ENCODE measurements at regions of chr22 and their contacts with region 1.

Region 1: GRCh38 chr22:35430897-35431322 is 31.0 kb downstream of the MCM5 start:
- DNase-seq: peak; percentile 93
- ATAC-seq: peak; percentile 81
- H3K4me3 Mint-ChIP-seq: no peak overlapping the region
- H3K27ac Mint-ChIP-seq: no peak overlapping the region
- H3K4me1 Mint-ChIP-seq: peaks cover 11% of the 10 kb centered on the region
- H3K27me3 Mint-ChIP-seq: no peaks in the 10 kb centered on the region
- CTCF ChIP-seq: peak; percentile 97

Region 2: DNA sequence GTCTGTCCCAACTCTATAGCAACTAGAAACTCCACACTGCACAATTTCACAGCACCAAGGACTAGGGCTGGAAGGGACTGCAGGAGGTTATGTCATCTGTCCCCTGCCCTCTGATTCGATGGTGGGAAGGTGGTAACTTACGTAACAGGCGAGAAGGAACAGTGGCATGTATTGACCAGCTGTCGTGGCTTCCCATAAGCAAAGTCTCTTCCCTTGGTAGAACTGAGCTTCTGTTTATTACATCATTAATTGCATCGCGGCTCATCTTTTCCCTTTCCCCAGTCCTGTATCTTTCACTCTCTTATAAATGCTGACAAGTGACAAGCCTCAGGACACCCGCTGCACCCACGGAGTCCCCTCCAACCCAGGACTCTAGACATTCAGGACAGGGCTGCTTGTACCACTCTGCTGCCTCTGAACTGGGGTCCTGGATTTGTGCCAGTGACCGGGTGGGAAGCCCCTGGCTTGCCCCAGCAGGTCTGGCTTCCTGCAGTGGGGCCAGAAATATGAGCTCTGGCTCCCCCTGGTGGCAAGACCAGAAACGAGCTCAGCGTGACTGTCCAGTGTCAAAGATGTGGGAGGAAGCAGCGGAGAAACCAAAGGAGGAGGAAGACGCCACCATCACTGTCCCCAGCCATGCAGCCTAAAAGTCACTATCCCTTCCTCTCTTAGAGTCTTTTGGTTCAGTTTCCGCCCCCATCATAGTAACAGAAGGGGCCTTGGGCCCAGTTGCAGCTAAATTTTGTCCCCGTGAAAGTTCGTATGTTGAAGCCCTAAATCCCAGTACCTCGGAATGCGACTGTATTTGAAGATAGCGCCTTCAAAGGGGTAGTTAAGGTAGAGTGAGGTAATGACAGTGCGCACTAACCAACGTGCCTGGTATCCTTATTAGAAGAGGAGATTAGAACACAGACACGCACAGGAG is 280.5 kb before region 1 on chr22:
- CTCF ChIA-PET with region 1: no interaction called
- POLR2A ChIA-PET with region 1: no interaction called
- DNase-seq: peak; percentile 89
- ATAC-seq: peak; percentile 54
- H3K4me3 Mint-ChIP-seq: no peak overlapping the region
- H3K27ac Mint-ChIP-seq: no peak overlapping the region
- H3K4me1 Mint-ChIP-seq: peaks cover 35% of the 10 kb centered on the region
- H3K27me3 Mint-ChIP-seq: peaks cover 23% of the 10 kb centered on the region
- CTCF ChIP-seq: peak; percentile 82

Region 3: DNA sequence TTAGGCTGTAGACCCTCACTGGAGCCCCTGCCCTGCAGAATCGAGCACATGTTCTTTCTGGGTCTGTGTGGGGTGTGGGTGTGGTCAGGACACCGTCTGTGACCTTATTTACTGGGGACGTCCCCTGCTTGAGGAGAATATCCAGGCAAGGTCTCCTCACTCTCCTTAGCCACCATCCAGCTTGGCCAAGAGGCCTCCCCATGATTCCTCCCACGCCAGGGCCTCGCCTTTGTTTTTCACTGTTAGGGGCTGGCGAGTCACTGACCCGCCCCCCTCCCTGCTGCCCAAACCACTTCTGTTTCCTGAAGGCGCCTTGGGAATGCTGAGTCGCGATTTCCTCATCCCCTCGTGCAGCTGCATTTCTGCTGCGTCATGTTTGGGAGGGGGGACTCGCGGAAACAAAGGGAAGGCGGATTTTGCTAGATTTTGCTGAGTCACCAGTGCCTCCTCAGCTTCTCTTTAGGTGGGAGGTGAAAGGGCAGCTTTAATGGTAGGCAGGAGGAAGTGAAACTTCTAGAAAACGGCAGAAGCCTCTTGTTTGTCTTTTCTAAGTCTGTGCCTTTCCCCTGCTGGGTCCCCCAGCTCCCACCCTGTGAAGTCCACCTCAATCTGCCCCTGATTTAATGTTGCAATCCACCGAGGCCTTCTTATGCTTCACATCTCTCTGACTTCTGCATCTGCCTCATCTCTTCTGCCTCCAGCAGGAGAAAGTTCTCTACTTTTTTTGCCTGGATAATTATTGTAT is 54.0 kb before region 1 on chr22:
- CTCF ChIA-PET with region 1: interaction called, 4 read pairs
- POLR2A ChIA-PET with region 1: interaction called, 10 read pairs
- DNase-seq: peak; percentile 94
- ATAC-seq: peak; percentile 46
- H3K4me3 Mint-ChIP-seq: peak overlapping the region; percentile 18; the same call in 1 of the 2 replicates
- H3K27ac Mint-ChIP-seq: peak overlapping the region; percentile 90
- H3K4me1 Mint-ChIP-seq: peaks cover 70% of the 10 kb centered on the region
- H3K27me3 Mint-ChIP-seq: peaks cover 2% of the 10 kb centered on the region; the same call in 1 of the 2 replicates
- CTCF ChIP-seq: no peak

Region 4: DNA sequence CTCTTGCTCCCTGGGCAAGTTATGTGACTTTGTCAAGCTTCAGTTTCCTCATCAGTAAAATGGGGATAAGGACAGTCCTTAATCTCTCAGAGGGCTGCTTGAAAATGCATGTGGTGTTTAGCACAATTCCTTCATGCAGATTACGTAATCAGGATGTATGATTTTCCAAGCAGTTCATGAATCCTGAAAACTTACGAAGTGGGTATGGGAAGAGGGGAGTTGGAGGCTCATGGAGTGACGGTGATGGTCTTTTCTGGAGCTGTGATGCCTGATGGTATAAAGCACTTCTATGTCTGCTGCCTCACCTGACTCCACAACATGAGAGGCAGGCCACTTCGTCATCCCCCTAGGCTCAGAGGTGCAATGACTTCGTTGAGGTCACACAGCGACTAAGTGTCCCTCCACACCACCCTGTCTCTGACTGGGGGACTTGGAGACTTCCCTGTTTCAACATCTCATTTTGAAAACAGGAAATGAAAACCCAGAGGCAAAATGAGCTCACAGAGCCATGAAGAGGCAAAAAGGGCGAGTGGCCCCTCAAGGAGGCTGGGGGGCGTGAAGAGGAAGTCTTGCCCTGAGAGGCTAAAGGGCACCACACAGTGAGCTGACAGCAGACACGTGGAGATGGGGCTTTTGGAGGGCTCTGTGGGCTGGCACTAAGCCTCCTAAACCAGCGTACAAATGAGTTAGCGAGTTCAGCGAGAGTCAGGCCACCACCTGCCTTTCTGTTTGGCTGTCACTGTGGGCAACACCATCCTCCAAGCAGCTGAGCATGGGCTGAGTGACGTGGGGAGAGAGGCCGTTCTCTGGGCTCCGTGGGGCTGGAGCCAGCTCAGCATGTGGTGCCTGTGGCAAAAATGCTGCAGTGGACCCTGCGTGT is 20.9 kb before region 1 on chr22:
- CTCF ChIA-PET with region 1: interaction called, 3 read pairs
- POLR2A ChIA-PET with region 1: interaction called, 11 read pairs
- DNase-seq: no peak
- ATAC-seq: no peak
- H3K4me3 Mint-ChIP-seq: no peak overlapping the region
- H3K27ac Mint-ChIP-seq: 0 out of 2 replicates have a peak overlapping the region, but pooled peaks have one; percentile 15
- H3K4me1 Mint-ChIP-seq: no peaks in the 10 kb centered on the region
- H3K27me3 Mint-ChIP-seq: no peaks in the 10 kb centered on the region
- CTCF ChIP-seq: no peak

Region 5: DNA sequence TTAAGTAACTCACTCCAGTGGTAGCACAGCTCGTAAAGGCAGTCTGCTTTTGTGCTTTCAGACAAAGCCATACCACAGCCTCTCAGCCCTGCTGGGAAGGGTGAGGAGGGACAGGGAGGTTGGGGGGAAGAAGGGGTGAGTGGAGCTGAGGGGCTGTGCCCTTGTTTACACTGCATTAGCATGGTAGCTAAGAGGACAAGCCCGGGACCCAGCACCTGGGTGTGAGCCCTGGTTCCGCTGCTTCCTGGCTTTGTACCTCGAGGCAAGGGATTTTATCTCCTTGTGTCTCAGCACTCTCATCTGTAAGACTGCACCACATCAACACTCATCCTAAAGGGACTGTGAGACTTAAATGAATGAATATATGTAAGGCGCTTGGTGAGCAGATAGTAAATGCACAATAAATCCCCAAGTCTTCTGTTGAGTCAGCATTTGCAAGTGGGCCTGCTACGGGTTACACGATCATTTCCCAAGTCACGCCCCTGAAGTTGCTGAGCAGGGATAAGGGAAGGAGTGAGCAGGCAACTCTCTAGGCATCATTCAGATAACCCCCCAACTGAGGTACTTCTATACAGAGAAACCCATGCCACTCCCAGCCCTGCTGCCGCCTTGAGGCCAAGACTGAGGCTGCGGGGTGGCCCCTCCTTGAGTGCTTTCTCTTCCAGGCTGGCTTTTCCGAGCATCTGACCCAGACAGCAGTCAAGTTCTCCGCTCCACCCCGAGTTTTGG is 117.2 kb after region 1 on chr22:
- CTCF ChIA-PET with region 1: interaction called, 14 read pairs
- POLR2A ChIA-PET with region 1: no interaction called
- DNase-seq: peak; percentile 67
- ATAC-seq: peak; percentile 82
- H3K4me3 Mint-ChIP-seq: no peak overlapping the region
- H3K27ac Mint-ChIP-seq: no peak overlapping the region; the same call in 1 of the 2 replicates
- H3K4me1 Mint-ChIP-seq: peaks cover 44% of the 10 kb centered on the region
- H3K27me3 Mint-ChIP-seq: no peaks in the 10 kb centered on the region
- CTCF ChIP-seq: no peak

Region 6: DNA sequence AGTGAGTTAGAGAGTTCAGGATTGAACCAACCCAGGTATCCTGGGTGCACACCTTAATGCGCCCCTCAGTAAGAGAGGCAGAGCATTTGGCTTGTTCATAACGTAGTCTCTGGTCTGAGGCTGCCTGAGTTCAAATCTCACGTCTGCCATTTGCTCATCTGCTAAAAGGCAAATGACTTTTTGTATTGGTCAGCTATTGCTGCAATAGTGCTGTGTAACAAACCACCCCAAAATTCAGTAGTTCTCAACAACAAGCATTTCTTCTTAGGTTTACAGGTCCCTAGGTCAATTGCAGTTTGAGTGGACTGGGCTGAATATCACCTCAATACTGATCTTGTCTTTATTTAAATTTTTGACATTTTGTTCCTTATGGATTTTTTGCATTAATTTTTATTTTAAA is 127.8 kb after region 1 on chr22:
- CTCF ChIA-PET with region 1: no interaction called
- POLR2A ChIA-PET with region 1: no interaction called
- DNase-seq: no peak
- ATAC-seq: no peak
- H3K4me3 Mint-ChIP-seq: no peak overlapping the region
- H3K27ac Mint-ChIP-seq: no peak overlapping the region
- H3K4me1 Mint-ChIP-seq: peaks cover 20% of the 10 kb centered on the region
- H3K27me3 Mint-ChIP-seq: no peaks in the 10 kb centered on the region
- CTCF ChIP-seq: no peak

Region 7: DNA sequence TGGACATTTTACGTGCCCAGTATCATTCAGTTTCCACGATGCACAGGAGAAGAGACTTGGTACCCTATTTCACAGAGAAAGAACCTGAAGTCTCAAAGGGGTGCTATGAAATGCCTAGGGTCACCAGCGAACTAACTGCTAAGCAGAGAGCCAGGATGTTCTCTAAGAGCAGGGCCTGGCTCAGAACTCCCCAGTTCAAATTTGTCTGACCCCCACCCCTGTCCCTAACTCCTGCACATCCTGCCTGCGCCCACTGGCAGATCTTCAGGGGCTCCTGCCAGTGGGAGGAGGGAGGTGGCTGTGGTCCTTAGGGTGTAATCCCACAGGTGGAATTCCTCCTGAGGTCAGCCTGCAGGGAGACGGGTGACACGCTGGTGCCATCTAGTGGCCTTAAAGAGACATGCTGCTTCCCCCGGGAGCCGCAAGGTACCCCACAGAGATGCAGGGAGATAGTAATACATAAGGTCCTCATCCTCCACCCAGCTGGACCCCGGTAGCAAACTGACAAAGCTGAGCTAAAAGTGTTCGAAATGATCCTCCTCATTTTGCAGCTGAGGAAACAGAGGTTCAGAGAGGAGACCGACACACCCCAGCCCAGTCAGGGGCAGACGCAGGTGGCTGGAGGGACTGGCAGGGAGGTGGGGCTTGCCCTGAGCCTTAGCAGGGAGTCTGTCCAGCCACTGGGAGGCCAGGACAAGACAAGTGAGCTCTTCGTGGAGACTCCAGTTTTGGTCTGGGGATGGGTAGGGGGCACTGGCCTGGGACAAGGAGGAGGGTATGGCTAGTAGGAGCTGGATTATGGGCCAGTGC is 152.2 kb after region 1 on chr22:
- CTCF ChIA-PET with region 1: interaction called, 30 read pairs
- POLR2A ChIA-PET with region 1: no interaction called
- DNase-seq: peak; percentile 65
- ATAC-seq: peak; percentile 86
- H3K4me3 Mint-ChIP-seq: no peak overlapping the region
- H3K27ac Mint-ChIP-seq: no peak overlapping the region
- H3K4me1 Mint-ChIP-seq: no peaks in the 10 kb centered on the region
- H3K27me3 Mint-ChIP-seq: no peaks in the 10 kb centered on the region
- CTCF ChIP-seq: peak; percentile 94

Region 8: GRCh38 chr22:36162127-36163034 is 731.5 kb after region 1 on chr22:
- CTCF ChIA-PET with region 1: no interaction called
- POLR2A ChIA-PET with region 1: no interaction called
- DNase-seq: no peak
- ATAC-seq: no peak
- H3K4me3 Mint-ChIP-seq: no peak overlapping the region
- H3K27ac Mint-ChIP-seq: no peak overlapping the region
- H3K4me1 Mint-ChIP-seq: peaks cover 27% of the 10 kb centered on the region
- H3K27me3 Mint-ChIP-seq: no peaks in the 10 kb centered on the region
- CTCF ChIP-seq: no peak